ENCODE measurements at regions of chr10 and their contacts with region 1.

Region 1: DNA sequence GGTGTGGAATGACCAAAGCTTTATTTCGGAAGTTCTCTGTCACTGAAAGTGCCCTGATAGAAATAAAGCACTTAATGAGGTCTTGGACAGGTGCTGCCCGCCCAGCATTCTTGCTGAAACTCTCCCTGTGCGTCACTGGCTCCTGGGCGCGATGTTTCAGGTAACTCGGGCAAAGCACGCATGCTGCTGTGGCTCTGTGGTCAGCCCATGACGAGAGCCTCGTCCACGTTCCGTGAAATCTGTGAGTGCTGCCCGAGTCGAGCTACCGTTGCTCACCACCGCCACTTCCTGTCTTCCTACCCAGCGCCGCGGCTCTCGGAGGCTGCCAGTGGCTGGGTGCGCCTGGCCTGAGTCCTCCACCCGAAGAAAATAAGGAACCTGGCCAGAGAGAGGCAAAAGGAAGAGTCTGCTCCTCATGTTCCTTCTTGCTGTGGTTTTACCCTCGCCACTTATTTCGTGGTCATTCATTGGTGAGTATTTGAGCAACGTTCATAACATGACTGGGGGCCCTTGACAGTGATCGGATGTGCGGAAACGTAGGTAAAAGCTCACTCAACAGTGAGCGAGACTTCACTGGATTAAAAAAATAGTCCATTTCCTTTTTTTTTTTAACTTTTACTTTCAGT is 95.5 kb downstream of the MAP3K8 start:
- DNase-seq: peak; percentile 77
- H3K4me3 ChIP-seq: peak overlapping the region; percentile 47
- H3K27ac ChIP-seq: peak overlapping the region; percentile 60
- H3K4me1 ChIP-seq: peaks cover 14% of the 10 kb centered on the region
- CTCF ChIP-seq: no peak

Region 2: GRCh38 chr10:30348378-30348776 is 181.1 kb before region 1 on chr10:
- CTCF ChIA-PET with region 1: no interaction called
- POLR2A ChIA-PET with region 1: interaction called, 3 read pairs
- intact Hi-C with region 1: loop called (anchors 1 kb)
- DNase-seq: peak; percentile 26
- H3K4me3 ChIP-seq: peak overlapping the region; percentile 81
- H3K27ac ChIP-seq: peak overlapping the region; percentile 63
- H3K4me1 ChIP-seq: peaks cover 30% of the 10 kb centered on the region
- CTCF ChIP-seq: no peak

Region 3: GRCh38 chr10:30413996-30414576 is 115.4 kb before region 1 on chr10:
- CTCF ChIA-PET with region 1: interaction called, 3 read pairs
- POLR2A ChIA-PET with region 1: interaction called, 29 read pairs
- intact Hi-C with region 1: loop called (anchors 1 kb)
- DNase-seq: peak; percentile 79
- H3K4me3 ChIP-seq: no peak overlapping the region
- H3K27ac ChIP-seq: no peak overlapping the region
- H3K4me1 ChIP-seq: peaks cover 24% of the 10 kb centered on the region
- CTCF ChIP-seq: peak; percentile 90

Region 4: GRCh38 chr10:30422981-30423654 is 106.4 kb before region 1 on chr10:
- CTCF ChIA-PET with region 1: no interaction called
- POLR2A ChIA-PET with region 1: interaction called, 29 read pairs
- intact Hi-C with region 1: loop called (anchors 1 kb)
- DNase-seq: peak; percentile 40
- H3K4me3 ChIP-seq: no peak overlapping the region
- H3K27ac ChIP-seq: no peak overlapping the region
- H3K4me1 ChIP-seq: peaks cover 49% of the 10 kb centered on the region
- CTCF ChIP-seq: no peak

Region 5: GRCh38 chr10:30980951-30981616 is 451.6 kb after region 1 on chr10:
- CTCF ChIA-PET with region 1: no interaction called
- POLR2A ChIA-PET with region 1: no interaction called
- intact Hi-C with region 1: no loop called
- DNase-seq: no peak
- H3K4me3 ChIP-seq: no peak overlapping the region
- H3K27ac ChIP-seq: no peak overlapping the region
- H3K4me1 ChIP-seq: no peaks in the 10 kb centered on the region
- CTCF ChIP-seq: no peak